ENCODE measurements at regions of chr10 and their contacts with region 1.

Region 1: DNA sequence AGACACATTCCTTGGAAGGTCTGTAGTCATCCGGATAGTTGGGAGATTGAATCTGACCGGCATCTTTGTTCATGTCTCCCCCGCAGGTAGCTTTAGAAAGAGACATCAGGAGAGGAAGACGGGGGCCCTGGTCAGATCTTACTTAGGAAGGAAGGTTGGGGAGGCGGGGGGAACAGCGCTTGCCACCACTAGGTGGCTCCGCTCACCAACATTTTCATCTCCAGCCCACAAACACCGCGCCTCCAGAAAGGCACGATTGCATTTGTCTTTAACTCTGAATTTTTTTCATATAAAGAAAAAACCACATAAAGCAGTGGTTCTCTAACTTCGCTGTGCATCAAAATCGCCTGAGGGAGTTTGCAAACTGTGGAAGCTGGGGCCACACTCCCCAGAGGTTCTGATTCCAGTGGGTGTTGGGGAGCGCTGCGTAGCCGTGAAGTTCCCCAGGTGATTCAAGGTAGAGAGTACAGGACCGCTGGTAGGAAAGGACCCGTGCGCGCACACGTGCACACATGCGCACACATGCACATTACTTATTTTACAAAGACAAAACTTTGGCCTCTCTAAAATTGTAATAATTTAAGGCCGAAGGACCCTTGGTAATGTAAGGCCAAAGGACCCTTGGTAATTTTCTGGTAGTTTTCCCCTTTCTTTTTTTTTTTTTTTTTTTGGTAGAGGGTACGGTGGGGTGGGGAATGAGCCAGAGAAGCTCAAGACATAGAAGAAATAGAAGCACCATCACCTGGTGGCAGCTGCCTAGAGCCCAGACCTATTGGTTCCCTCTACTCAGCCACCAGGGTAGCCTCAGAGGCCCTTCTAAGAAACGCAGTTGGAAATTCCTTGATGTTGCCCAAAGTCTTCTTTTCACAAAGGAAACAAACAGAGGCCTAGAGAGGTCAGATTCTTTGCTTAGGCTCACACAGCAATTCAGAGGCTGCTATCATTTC is 37.4 kb upstream of the OPALIN start:
- DNase-seq: peak; percentile 84
- ATAC-seq: peak; percentile 89

Region 2: GRCh38 chr10:96374985-96375830 is 21.0 kb before region 1 on chr10:
- intact Hi-C with region 1: no loop called
- DNase-seq: peak; percentile 92
- ATAC-seq: peak; percentile 89

Region 3: DNA sequence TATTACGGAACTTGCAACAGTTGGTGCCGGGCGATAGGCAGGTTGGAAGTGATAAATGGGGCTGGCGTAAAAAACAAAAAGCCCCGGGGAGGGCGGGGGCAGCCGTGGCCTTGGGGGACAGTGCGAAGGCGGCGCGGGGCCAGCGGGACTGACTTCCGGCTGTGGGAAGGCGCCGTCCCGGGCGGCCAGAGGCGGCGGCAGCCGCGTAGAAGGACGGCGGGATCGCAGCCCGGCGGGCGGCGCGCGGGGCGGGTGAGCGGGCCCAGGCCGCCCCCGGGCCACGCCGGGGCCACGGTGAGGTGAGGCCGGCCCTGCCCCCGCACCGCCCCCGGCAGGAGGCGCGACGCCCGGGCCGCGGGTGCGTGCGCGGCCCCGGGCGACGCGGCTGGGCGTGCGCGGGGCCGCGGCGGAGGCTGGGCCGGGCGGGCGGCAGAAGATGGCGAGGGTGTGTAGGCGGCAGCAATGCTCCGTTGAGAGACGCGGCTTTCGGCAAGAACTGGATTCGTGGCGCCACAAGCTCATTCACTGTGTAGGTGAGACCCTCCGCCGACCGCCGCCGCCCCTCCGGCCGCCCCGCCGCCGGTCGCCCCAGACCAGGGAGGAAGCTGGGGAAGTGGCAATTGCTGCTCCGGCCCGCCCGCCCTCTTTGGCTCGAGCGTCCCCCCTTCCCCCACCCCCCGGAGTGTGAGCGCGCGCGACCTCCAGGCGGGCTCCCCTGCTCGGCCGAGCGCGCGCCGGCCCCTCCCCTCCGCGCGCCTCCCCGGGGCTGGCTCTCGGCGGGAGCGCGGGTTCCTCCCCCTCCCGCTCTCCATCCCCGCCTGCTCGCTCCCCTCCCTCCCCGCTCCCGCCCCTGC is 435.9 kb after region 1 on chr10 and contains the start of gene LCOR:
- intact Hi-C with region 1: loop called (anchors 10 kb)
- DNase-seq: peak; percentile 89
- ATAC-seq: peak; percentile 94
- total RNA-seq, gene LCOR: 50.1 TPM

Measured in sciatic nerve (tissue), 2 donors.